Breast epithelium (tissue), 4 donors: ENCODE measurements at regions of chr5 and their contacts with region 1.

Region 1: DNA sequence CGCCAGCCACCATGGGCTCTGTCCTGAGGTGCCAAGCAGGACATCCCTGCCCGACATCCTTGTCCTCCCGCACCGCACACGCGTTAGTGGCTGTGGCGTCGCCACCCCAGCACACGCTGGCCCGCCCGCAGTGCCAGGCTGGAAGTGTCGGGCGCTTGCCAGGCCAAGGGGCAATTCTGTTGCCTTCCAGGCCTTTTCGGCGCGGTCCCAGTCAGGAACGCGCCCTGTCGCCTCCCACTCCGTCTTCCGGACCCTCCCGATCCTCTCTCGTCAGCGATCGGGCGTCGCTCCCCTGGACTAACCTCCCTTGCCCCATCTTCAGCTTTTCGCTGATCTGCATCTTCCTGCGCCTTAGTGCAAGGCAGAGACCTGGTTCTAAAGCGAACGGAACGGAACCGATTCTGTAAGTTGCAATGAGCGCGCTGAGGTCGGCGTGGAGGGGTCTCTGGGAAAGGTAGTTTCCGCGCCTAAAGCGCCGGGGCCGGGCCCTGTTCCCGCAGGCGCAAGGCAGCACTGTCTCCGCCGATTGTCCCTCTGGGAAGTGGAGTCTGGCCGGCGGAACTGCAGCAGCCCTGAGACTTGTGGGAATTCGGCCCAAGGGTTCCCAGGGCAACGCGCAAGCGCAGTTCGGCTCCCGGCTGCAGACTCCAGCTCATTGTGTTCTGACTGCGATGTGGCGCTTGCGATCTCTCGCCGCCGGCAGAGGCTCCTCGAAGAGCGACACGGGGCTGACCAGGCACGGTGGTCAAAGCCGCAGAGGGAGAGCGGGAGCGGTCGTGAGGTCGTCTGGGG is at the start of gene ZNF454:
- DNase-seq: peak; percentile 81 to 86
- H3K4me3 ChIP-seq: peak within 1 kb of the TSS; percentile 58 to 83 (median 69)
- H3K27ac ChIP-seq: peak within 1 kb of the TSS; percentile 71 to 89
- H3K4me1 ChIP-seq: no peaks in the 10 kb centered on the region
- H3K27me3 ChIP-seq: no peaks in the 10 kb centered on the region
- CTCF ChIP-seq: no peak
- POLR2A ChIP-seq: no peak
- total RNA-seq, gene ZNF454: 1.9 to 5.2 (median 4.2) TPM

Region 2: DNA sequence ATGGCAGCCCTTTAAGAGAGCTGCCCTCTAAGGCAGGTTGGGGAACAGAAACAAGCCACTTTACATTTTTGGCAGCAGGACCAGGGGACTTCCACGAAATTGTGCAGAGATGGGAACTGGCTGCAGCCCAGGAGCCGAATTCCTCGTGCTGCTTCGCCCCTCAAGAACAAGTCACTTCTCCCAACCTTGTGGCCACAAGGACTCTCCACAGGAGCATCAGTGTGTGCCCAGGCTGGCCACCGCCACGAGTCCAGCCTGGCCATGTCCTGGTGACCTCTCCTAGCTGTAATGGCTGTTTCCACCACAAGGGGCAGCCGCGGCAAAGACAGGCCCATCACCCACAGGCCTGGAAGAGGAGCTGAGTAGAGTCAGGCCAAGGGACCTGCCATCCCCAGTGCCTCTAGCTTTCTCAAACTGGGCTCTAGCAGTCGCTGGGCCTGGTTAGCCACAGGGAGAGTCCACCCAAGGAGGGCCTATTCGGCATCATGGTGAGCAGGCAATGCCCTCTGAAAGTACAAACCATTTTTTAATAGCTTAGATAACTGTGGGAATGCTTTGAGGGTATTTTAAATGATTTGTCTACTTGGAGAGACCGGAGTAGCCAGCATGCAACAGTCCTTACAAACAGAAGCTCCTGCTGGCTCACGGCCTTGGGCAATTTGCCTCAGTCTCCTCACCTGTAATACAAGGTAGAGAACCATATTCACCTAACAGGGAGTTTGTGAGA is 479.6 kb before region 1 on chr5:
- intact Hi-C with region 1: no loop called
- DNase-seq: peak; percentile 57 to 63
- H3K4me3 ChIP-seq: no peak overlapping the region
- H3K27ac ChIP-seq: no peak overlapping the region
- H3K4me1 ChIP-seq: no peaks in the 10 kb centered on the region
- H3K27me3 ChIP-seq: no peaks in the 10 kb centered on the region
- CTCF ChIP-seq: peak; percentile 59 to 68 (median 66)
- POLR2A ChIP-seq: no peak

Region 3: DNA sequence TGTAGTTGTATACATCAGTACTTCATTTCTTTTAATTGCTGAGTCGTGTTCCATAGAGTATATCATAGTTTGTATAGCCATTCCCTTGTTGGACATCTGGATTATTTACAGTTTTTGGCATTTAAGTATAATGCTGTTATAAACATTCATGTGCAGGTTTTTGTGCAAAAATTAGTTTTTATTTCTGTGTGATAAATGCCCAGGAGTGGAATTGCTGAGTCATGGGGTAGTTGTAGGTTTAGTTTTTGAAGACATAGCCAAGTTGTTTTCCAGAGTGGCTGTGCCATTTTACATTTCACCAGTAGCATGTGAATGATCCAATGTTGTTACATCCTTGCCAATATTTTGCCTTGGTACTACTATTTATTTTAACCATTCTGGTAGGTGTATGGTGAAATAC is 68.5 kb before region 1 on chr5:
- intact Hi-C with region 1: no loop called
- DNase-seq: no peak
- H3K4me3 ChIP-seq: no peak overlapping the region
- H3K27ac ChIP-seq: no peak overlapping the region
- H3K4me1 ChIP-seq: no peaks in the 10 kb centered on the region
- H3K27me3 ChIP-seq: no peaks in the 10 kb centered on the region
- CTCF ChIP-seq: no peak
- POLR2A ChIP-seq: no peak

Region 4: GRCh38 chr5:178994580-178995340 is 54.0 kb after region 1 on chr5 and contains the start of gene GRM6:
- intact Hi-C with region 1: loop called (anchors 2 kb)
- DNase-seq: no peak
- H3K4me3 ChIP-seq: peak within 1 kb of the TSS in 1 of 3 donors; percentile 31
- H3K27ac ChIP-seq: no peak within 1 kb of the TSS
- H3K4me1 ChIP-seq: no peaks in the 10 kb centered on the region
- H3K27me3 ChIP-seq: peaks cover 0 to 42% of the 10 kb centered on the region in 2 donors
- CTCF ChIP-seq: no peak
- POLR2A ChIP-seq: no peak
- total RNA-seq, gene GRM6: not detected